CD4-positive, alpha-beta T cell (primary cell): ENCODE measurements at regions of chr10 and their contacts with region 1.

Region 1: GRCh38 chr10:126658928-126659327 is 11.6 kb downstream of the C10orf90 start:
- DNase-seq: no peak
- ATAC-seq: no peak
- H3K4me3 ChIP-seq: no peak overlapping the region
- H3K4me3 Mint-ChIP-seq: no peak overlapping the region
- H3K27ac ChIP-seq: no peak overlapping the region
- H3K27ac Mint-ChIP-seq: no peak overlapping the region
- H3K4me1 ChIP-seq: no peaks in the 10 kb centered on the region
- H3K4me1 Mint-ChIP-seq: no peaks in the 10 kb centered on the region
- H3K27me3 ChIP-seq: no peaks in the 10 kb centered on the region
- H3K27me3 Mint-ChIP-seq: peaks cover 9% of the 10 kb centered on the region
- CTCF ChIP-seq: no peak

Region 2: GRCh38 chr10:126702181-126702580 is 43.3 kb after region 1 on chr10:
- CTCF ChIA-PET with region 1: no interaction called
- POLR2A ChIA-PET with region 1: no interaction called
- intact Hi-C with region 1: no loop called
- DNase-seq: no peak
- ATAC-seq: no peak
- H3K4me3 ChIP-seq: no peak overlapping the region
- H3K4me3 Mint-ChIP-seq: no peak overlapping the region
- H3K27ac ChIP-seq: no peak overlapping the region
- H3K27ac Mint-ChIP-seq: no peak overlapping the region
- H3K4me1 ChIP-seq: no peaks in the 10 kb centered on the region
- H3K4me1 Mint-ChIP-seq: no peaks in the 10 kb centered on the region
- H3K27me3 ChIP-seq: no peaks in the 10 kb centered on the region
- H3K27me3 Mint-ChIP-seq: no peaks in the 10 kb centered on the region
- CTCF ChIP-seq: no peak

Region 3: DNA sequence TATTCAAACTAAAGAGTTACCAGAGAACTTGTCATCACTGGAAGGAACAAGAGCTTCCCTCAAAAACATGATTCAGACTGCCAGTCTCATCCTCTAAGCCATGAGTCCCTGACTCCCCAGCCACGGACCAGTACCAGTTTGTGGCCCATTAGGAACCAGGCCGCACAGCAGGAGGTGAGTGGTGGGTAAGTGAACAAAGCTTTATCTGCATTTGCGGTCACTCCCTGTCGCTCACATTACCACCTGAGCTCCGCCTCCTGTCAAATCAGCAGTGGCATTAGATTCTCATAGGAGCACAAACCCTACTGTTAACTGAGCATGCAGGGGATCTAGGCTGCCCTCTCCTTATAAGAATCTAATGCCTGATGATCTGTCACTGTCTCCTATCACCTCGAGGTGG is 53.8 kb after region 1 on chr10:
- CTCF ChIA-PET with region 1: no interaction called
- POLR2A ChIA-PET with region 1: no interaction called
- intact Hi-C with region 1: loop called in 1 of 2 experiments (anchors 10 kb)
- DNase-seq: no peak
- ATAC-seq: no peak
- H3K4me3 ChIP-seq: no peak overlapping the region
- H3K4me3 Mint-ChIP-seq: no peak overlapping the region
- H3K27ac ChIP-seq: no peak overlapping the region
- H3K27ac Mint-ChIP-seq: no peak overlapping the region
- H3K4me1 ChIP-seq: no peaks in the 10 kb centered on the region
- H3K4me1 Mint-ChIP-seq: no peaks in the 10 kb centered on the region
- H3K27me3 ChIP-seq: no peaks in the 10 kb centered on the region
- H3K27me3 Mint-ChIP-seq: no peaks in the 10 kb centered on the region
- CTCF ChIP-seq: no peak